Heart right ventricle (tissue), 16 donors: ENCODE measurements at regions of chr19 and their contacts with region 1.

Region 1: DNA sequence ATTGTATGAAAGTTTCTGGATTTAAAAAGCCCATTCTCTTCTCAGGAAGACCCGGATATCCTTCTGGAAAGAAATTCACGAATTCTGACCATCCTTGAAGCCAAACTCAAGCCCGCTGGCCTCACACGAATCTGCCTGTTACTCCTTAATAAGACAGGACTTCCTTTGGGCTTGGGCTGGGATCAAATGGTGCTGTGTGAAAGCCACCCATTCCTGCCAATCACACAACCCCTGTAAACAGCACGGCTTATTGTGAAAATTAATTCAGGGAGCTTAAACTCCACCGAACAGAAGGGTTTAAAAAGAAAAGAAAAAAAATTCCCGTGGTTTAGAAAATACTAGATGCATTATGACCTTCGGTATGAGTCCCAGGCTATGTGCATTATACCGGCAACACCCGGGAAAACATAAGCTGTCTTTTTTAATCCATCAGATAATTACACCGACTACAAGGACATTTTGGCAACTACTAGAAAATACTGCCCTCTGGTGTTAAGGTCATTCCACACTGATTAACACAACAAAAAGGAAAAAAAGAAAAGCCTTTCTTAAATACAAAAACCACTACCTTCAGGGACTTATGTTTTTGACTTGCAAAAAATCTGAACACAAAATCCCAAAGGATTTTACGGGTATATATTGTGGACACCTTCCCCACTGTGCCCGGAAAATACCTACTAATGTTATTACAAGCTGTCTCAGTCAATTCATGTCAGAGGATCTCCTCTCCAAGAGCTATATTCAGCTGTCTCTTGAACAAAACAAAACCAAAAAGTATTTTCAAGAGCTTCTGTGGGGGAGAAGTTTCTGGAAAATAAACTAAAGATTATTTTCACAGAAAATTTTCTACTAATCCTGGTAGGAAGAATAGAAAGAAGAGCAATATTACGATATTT is 76.0 kb upstream of the LSM14A start:
- DNase-seq: peak in 1 of 2 donors; percentile 16
- ATAC-seq: peak in 2 of 8 donors; percentile 33 to 59
- H3K4me3 ChIP-seq: no peak overlapping the region
- H3K27ac ChIP-seq: no peak overlapping the region
- H3K4me1 ChIP-seq: peaks cover 0 to 8% (median 0%) of the 10 kb centered on the region in 9 donors
- H3K27me3 ChIP-seq: peaks cover 0 to 50% (median 6%) of the 10 kb centered on the region in 7 donors
- CTCF ChIP-seq: peak; percentile 25 to 76 (median 67)

Region 2: DNA sequence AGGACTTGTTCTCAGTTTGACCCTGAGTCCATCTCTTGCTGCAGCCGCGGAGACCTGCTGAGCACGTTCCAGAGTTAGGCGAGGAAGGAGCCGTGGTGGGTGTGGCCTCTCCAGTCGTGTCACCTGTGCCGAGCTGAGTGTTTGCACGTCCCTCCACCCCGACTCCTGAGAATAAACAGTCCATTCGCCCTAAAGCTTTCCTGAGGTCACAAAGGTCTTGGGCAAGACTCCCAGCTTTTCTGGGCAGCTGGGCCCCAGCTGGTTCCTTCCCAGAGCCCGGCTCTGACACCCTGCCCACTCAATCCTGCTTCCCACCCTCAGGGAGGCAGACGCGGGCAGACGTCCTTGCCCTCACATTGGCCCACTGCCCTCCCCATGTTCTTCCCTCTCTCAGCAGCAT is 157.5 kb before region 1 on chr19:
- intact Hi-C with region 1: no loop called
- DNase-seq: no peak
- ATAC-seq: no peak
- H3K4me3 ChIP-seq: no peak overlapping the region
- H3K27ac ChIP-seq: no peak overlapping the region
- H3K4me1 ChIP-seq: no peaks in the 10 kb centered on the region
- H3K27me3 ChIP-seq: peaks cover 0 to 7% (median 0%) of the 10 kb centered on the region in 7 donors
- CTCF ChIP-seq: no peak

Region 3: GRCh38 chr19:34041925-34042521 is 54.2 kb before region 1 on chr19:
- intact Hi-C with region 1: loop called in 1 of 10 experiments (anchors 2 kb)
- DNase-seq: peak; percentile 50 to 68
- ATAC-seq: peak in 1 of 8 donors; percentile 45
- H3K4me3 ChIP-seq: no peak overlapping the region
- H3K27ac ChIP-seq: no peak overlapping the region
- H3K4me1 ChIP-seq: no peaks in the 10 kb centered on the region
- H3K27me3 ChIP-seq: peaks cover 0 to 32% (median 0%) of the 10 kb centered on the region in 7 donors
- CTCF ChIP-seq: peak; percentile 38 to 91 (median 80)